ENCODE measurements at regions of chr5 and their contacts with region 1.

Region 1: DNA sequence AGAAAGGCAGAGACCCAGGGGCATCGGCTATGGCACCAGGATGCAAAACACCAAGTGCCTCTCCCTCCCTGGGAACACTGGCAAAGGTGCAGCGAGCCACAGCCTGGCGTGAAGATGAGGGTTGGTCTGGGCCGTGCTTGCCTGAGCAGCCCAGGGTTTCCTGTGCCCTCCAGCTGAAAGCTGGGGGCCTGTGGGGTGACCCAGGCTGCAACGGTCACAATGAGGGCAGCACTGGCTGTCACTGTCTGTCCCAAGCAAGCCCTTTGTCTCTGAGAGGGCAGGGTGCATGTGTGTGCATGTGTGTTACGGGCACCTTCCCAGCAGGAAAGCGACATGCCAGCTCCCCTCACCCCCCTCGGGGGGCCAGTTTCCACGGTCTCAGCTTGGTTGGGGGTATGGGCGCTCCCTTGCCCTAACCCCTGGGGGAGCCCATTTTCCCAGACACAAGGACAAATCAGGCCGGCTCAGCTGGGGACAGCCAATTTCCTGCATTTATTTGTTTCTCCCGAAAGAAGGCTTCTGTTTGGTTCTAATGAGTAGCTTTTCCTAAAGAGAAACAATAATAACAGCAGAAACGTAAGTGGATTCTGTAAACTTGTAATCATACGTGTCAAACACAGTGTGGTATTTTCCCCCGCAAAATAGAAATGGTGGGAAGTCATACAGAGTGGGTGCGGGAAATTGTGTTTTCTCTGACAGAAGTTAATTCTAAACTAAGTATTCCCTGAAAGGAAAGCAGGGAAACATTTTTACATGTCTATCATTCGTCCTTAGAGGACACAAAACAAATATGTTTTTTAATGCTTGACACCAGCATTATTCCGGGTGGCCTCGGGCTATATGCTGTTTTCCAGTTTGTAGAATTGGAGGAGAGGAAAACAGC is 21.3 kb downstream of the MRPL36 start:
- DNase-seq: peak; percentile 54
- H3K4me3 ChIP-seq: no peak overlapping the region
- H3K27ac ChIP-seq: no peak overlapping the region
- H3K4me1 ChIP-seq: peaks cover 0 to 14% (median 2%) of the 10 kb centered on the region in 6 donors
- H3K27me3 ChIP-seq: peaks cover 0 to 19% (median 0%) of the 10 kb centered on the region in 7 donors
- CTCF ChIP-seq: no peak
- POLR2A ChIP-seq: no peak

Region 2: DNA sequence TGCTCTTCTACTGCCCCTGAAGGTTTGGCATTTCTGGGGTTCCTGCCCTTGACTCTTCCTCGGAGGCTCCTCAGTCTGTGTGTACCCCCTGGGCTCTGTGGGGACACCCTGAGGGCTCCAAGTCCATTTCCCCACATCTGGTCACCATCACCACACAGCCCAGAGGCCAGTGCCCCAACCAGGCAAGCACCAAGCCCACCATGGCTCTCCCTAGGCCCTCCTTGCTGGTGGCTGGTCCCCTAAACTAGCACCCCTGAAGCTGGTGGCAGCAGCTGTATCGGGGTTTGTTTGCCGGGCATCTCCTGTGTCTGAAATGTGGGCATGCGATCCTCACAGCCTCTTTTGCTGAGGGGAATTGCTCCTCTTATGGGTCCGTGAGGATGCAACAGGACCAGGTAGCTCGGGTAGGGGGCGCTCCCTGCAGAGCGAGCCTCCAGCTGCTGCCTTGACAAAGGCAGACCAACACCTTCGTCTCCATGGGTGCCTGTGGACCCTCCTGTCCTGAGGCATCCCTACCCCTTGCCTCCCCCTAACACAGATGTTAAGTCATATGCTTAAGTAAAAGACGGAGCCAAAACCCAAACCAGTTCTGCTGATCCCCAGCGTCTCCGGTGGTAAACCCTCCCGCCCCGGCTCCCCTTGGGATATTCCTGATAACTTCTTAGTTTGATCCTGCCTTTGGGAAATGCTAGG is 243.3 kb after region 1 on chr5:
- intact Hi-C with region 1: loop called (anchors 5 kb)
- DNase-seq: no peak
- H3K4me3 ChIP-seq: no peak overlapping the region
- H3K27ac ChIP-seq: no peak overlapping the region
- H3K4me1 ChIP-seq: no peaks in the 10 kb centered on the region
- H3K27me3 ChIP-seq: peaks cover 0 to 64% (median 0%) of the 10 kb centered on the region in 7 donors
- CTCF ChIP-seq: no peak
- POLR2A ChIP-seq: no peak

Region 3: DNA sequence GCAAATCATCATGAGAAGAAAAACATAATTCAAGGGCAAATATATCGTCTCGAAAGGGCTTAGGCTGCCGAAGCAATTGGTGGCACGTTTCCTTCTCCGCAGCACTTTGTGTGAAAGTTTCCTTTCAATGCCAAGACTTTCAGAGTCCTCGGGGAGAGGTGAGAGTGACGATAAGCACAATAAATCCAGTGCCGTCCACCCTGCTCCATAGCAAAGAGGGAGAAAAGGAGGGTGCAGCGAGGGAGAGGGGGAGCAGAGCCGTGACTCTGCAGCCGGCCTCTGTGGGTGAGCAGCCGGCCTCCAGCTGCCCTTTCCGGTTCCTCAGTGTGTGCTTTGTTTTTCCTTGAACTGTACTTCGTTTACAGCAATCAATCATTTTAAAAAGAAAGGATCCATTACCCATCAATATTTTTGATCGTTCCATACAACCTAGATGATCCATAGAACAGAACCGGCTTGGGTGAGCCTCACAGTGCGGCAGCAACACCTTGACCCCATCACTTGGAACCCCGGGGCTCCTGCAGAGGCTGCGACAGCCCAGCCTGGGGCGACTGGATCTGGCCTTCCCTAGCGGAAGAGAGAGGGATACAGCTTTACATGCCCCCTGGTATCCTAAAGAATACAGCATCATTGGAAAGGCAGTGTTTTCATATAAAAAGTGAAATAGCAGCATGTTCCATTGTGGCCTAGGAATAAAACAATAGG is 351.3 kb after region 1 on chr5:
- intact Hi-C with region 1: no loop called
- DNase-seq: no peak
- H3K4me3 ChIP-seq: no peak overlapping the region
- H3K27ac ChIP-seq: no peak overlapping the region
- H3K4me1 ChIP-seq: peaks cover 0 to 5% (median 0%) of the 10 kb centered on the region in 6 donors
- H3K27me3 ChIP-seq: peaks cover 0 to 15% (median 0%) of the 10 kb centered on the region in 7 donors
- CTCF ChIP-seq: no peak
- POLR2A ChIP-seq: no peak

Measured in spleen (tissue), 13 donors.